ENCODE measurements at regions of chr5 and their contacts with region 1.

Region 1: DNA sequence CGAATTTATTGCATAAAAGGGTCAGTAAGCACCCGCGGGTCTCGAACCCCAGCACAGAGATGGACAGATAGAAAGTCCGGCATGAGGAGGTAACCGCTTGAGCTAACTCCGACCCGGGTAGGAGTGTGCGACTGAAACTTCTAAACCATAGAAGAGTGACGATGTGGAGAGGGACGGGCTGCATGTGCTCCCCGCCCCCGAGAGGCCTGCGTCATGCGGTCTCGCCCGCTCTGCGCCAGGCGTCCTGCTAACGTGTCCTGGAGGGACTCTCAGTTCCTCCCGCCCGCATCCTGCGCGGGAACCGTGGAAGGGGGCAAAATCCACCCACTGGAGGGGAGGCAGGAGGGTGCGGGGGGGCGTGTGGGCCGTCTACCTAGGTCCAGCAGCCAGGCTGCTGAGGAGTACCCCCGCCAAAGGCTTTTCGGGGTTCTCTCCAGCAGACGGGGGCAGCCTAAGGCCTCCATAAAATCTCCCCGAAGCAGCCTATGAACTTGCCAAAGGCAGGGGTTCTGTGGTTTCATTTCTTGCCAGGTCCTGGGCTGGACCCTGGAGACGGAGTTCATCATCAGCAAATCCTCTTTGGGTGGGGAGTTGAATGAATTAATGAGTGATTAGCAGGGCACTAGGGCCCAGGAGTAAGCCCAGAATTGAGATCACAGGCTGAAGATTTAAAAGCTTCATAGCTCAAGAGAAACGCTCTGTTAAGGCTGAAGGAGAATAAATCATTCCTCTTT is 51.9 kb downstream of the TGFBI start:
- DNase-seq: peak; percentile 85 to 87
- ATAC-seq: peak; percentile 96

Region 2: GRCh38 chr5:135887351-135887864 is 193.2 kb before region 1 on chr5:
- intact Hi-C with region 1: loop called in 1 of 2 experiments (anchors 10 kb)
- DNase-seq: peak; percentile 51 to 64
- ATAC-seq: peak; percentile 99

Region 3: DNA sequence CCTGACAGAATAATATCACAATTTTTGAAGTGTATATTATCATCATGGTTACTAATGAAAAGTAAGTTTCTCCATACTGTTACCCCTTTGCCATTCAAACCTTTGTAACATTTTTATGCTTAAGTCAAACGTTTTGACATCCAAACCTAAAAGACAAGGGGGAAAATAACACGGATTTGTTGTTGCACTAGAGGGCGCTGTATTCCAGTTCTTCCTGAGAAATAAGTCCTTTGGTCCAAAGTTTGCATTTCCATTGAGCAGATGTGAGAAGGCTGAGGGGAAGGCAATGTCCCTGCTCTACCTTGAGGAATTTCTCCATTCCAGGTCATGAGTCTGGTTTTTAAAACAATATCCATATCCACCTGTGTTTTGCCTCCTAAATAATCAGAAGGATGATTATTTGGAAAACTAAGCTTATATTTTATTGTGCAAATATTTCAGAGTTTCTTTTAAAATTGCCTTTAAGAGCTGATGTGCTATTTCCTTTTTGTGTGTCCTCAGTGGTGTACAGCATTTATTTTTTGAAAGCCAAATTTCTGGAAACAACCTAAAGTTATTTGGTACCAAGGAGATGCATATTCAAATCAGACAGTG is 135.6 kb before region 1 on chr5:
- intact Hi-C with region 1: loop called in 1 of 2 experiments (anchors 5 kb)
- DNase-seq: peak; percentile 34 to 51
- ATAC-seq: peak; percentile 63

Region 4: DNA sequence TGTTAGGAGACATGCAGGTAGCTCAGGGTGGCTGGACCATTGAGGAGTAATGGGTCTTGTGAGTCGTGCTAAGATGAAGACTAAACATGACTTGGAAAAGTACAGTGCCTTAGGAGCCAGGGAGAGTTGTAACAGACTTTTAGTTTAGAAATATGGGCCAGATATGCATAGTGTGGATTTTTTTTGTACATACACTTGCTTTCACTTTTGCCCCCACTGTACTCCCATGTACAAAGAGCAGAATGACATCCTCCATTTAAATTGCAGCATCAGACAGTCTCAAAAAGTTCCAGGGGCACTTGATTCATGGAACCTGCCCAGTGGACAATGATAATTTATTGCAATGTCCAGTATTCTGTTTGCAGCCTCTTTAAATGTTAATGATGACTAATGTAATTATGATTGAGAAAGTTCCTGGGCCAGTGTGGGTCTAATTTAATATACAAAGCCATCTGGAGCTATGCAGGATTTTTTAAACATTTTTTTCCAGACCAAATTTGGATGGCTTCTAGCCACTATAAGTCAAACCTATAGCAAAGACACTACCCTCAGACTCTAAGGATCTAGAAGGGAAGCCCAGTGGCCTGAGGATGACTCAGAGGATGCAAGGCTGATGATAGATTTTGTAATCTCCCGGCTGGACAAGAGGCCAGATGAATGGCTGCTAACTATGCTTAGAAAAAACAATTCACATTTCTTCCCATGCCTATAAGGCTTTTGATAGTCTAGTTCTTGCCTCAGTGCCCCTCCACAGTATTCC is 204.6 kb after region 1 on chr5:
- intact Hi-C with region 1: no loop called
- DNase-seq: no peak
- ATAC-seq: no peak